Ascending aorta (tissue), 2 donors: ENCODE measurements at regions of chr3 and their contacts with region 1.

Region 1: GRCh38 chr3:44624749-44625480 is at the start of gene ZNF197:
- DNase-seq: peak; percentile 12 to 92
- H3K4me3 ChIP-seq: peak within 1 kb of the TSS; percentile 81 to 89
- H3K27ac ChIP-seq: peak within 1 kb of the TSS; percentile 85 to 94
- H3K4me1 ChIP-seq: peaks cover 0 to 6% of the 10 kb centered on the region in 2 donors
- H3K27me3 ChIP-seq: no peaks in the 10 kb centered on the region
- CTCF ChIP-seq: no peak
- total RNA-seq, gene ZNF197: 18.1 TPM

Region 2: GRCh38 chr3:44323341-44323955 is 301.5 kb before region 1 on chr3:
- intact Hi-C with region 1: loop called (anchors 10 kb)
- DNase-seq: peak in 1 of 2 donors; percentile 84
- H3K4me3 ChIP-seq: no peak overlapping the region
- H3K27ac ChIP-seq: no peak overlapping the region
- H3K4me1 ChIP-seq: no peaks in the 10 kb centered on the region
- H3K27me3 ChIP-seq: no peaks in the 10 kb centered on the region
- CTCF ChIP-seq: peak; percentile 47 to 88 (median 77)

Region 3: DNA sequence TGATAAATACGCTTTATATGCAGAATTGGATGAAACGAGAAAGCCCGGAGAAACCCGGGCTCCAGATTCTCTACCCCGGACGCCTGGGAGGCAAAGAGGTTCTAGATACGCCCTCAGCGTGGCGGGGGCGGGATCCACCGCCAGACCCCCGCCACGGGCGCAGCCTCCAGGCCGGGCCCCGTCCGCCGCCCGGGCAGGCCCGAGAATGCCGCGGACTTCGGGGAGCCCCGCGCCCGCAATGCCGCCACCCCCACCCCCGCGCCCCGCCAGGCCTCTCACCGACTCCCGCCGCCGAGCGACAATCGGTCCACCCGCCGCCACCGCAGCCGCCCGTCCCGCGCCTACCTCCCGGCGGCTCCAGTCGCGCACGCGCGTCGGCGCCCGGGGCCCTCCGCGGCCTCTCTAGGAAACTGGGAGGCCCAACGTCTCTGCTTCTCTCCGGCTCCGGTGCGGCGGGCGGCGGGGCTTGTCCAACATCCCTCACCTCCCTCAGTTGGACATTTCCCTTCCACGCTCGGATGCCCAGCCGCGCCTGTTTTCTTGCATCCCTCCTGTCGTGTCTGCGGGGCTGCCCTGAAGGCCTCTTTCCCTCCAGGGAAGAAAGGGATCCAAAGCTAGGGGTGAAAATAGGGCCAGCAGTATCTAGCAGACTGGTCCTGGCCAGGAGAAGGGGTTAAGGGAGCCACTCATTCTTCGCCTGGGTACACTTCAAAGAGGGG is 147.4 kb before region 1 on chr3 and contains the start of gene ZNF445:
- intact Hi-C with region 1: loop called (anchors 10 kb)
- DNase-seq: peak; percentile 14 to 90
- H3K4me3 ChIP-seq: peak within 1 kb of the TSS; percentile 74 to 90
- H3K27ac ChIP-seq: peak within 1 kb of the TSS; percentile 42 to 68
- H3K4me1 ChIP-seq: peaks cover 0 to 13% of the 10 kb centered on the region in 2 donors
- H3K27me3 ChIP-seq: no peaks in the 10 kb centered on the region
- CTCF ChIP-seq: no peak
- total RNA-seq, gene ZNF445: 6.6 TPM

Region 4: DNA sequence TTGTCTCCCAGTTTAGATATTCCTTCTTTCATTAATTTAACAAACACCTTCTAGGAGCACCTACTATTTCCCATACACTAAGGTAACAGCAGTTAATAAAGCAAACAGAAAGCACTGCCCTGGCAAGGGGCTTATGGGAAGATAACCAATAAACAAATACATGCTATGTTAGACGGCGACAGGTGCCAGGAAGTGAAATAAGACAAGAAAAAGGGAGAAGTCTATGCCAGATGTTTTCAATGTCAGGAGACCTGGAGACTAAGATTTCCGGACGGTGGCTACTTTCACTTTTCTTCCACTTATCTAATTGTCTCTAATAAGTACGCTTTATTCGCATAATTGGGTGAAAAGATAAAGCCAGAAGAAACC is 114.9 kb before region 1 on chr3:
- intact Hi-C with region 1: loop called (anchors 2 kb)
- DNase-seq: no peak
- H3K4me3 ChIP-seq: peak overlapping the region; percentile 96
- H3K27ac ChIP-seq: peak overlapping the region; percentile 89 to 94
- H3K4me1 ChIP-seq: peaks cover 0 to 11% of the 10 kb centered on the region in 2 donors
- H3K27me3 ChIP-seq: no peaks in the 10 kb centered on the region
- CTCF ChIP-seq: no peak

Region 5: GRCh38 chr3:44584646-44585501 is 40.0 kb before region 1 on chr3 and contains the start of gene ZNF660:
- intact Hi-C with region 1: loop called (anchors 2 kb)
- DNase-seq: peak in 1 of 2 donors; percentile 80
- H3K4me3 ChIP-seq: peak within 1 kb of the TSS; percentile 52 to 89
- H3K27ac ChIP-seq: peak within 1 kb of the TSS; percentile 74 to 86
- H3K4me1 ChIP-seq: no peaks in the 10 kb centered on the region
- H3K27me3 ChIP-seq: no peaks in the 10 kb centered on the region
- CTCF ChIP-seq: no peak
- total RNA-seq, gene ZNF660: 0.43 TPM

Region 6: DNA sequence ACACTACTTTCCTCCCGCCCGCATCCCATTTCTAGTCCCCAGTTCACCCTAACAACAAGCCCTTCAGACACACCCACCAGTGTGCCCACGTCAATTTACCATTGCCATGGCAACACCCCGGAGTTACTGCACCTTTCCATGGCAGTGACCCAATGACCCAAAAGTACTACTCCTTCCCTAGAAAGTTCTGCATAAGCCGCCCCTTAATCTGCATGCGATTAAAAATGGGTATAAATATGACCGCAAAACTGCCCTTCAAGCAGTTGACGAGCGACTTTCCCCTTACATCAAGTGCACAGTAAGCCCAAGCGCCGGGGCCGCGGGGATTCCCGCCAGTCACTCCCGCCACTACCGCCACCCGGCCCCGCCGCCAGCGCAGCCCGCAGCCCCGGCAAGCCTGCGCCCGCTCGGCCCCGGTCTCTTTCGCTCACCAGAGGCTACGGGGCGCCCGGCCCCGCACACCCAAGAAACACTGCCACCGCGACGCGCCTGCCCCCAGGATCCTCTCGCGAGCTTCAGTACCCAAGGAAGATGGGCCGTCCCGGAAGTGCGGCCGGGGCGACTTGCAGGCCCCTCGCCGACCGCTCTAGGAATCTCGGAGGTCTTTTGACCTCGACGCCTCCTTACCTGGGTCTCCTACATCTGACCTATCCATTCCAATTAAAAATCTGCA is 60.3 kb after region 1 on chr3:
- intact Hi-C with region 1: no loop called
- DNase-seq: peak in 1 of 2 donors; percentile 73
- H3K4me3 ChIP-seq: peak overlapping the region; percentile 49 to 90
- H3K27ac ChIP-seq: peak overlapping the region in 1 of 2 donors; percentile 9
- H3K4me1 ChIP-seq: peaks cover 0 to 3% of the 10 kb centered on the region in 2 donors
- H3K27me3 ChIP-seq: no peaks in the 10 kb centered on the region
- CTCF ChIP-seq: no peak

Region 7: DNA sequence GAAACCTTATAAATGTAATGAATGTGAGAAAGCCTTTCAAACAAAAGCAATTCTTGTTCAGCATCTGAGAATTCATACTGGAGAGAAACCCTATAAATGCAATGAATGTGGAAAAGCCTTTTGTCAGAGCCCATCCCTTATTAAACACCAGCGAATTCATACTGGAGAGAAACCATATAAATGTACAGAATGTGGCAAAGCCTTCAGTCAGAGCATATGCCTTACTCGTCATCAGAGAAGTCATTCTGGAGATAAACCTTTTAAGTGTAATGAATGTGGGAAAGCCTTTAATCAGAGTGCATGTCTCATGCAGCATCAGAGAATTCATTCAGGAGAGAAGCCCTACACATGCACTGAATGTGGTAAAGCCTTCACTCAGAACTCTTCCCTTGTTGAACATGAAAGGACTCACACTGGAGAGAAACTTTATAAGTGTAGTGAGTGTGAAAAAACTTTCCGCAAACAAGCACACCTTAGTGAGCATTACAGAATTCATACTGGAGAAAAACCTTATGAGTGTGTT is 109.8 kb after region 1 on chr3:
- intact Hi-C with region 1: loop called (anchors 10 kb)
- DNase-seq: no peak
- H3K4me3 ChIP-seq: no peak overlapping the region
- H3K27ac ChIP-seq: no peak overlapping the region
- H3K4me1 ChIP-seq: no peaks in the 10 kb centered on the region
- H3K27me3 ChIP-seq: no peaks in the 10 kb centered on the region
- CTCF ChIP-seq: no peak